ENCODE measurements at regions of chr3 and their contacts with region 1.

Region 1: DNA sequence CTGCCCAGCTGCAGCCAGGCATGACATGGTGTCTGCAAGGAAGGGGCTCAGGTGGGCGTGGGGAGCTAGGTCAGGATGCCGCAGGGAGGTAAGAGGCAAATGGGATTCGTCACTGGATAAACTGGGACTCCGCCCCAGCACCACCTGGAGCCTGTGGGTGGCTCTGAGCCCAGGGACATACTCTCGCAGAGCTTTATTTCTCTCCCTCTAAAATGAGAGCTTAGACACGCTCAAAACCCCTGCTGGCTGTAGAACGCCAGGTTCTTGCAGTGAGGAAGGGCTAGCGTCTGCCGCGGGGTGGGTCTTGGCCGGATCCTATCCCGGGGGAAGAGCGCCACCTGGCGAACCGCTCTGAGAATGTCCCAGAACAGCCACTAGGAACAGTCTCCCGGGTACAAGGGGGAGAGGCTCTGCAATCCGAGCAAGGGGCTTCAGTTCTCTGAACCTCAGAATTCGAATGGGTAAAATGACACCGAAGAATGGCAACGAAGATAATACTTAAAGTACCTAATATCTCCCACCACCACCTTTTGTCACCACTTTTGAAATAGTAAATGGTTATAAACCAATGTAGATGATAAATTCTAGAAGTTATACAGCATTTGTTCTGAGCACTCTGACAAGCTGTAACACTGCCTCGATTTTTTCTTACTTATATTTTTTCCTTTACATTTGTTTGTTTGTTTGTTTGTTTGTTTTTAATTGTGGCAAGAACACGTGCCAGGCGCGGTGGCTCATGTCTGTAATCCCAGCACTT is 53.2 kb upstream of the SRGAP3 start:
- DNase-seq: peak; percentile 93
- H3K4me3 Mint-ChIP-seq: peak overlapping the region; percentile 36
- H3K27ac Mint-ChIP-seq: no peak overlapping the region
- H3K4me1 Mint-ChIP-seq: peaks cover 6% of the 10 kb centered on the region
- H3K27me3 Mint-ChIP-seq: peaks cover 5% of the 10 kb centered on the region

Region 2: DNA sequence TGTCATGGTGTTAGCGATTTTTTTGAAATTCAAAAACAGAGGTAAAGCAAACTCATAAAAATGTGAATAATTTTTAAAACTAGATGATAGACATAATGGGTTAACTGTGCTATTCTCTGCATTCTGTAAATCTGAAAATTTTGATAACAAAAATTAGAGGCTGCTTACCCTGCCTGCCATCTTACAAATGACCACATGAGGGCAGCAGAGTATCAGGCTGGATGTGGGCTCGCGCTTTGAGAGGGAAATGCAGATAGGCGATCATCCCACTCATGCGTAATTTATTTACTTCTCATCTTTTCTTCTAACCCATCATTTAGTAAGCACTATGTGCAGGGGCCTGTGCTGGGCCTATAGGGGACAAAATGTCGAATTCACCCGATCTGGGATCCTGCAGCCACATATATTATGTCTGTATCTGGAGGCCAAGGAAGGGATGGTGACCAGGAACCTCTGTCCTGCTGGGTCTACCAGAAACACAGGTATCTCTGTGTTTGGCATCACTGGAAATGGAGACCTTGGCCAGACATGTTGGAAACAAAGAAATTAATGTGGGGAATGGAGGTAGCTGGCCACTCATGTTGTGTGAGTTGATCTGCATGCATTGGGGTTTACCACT is 331.5 kb before region 1 on chr3:
- intact Hi-C with region 1: loop called (anchors 1 kb)
- DNase-seq: peak; percentile 93
- H3K4me3 Mint-ChIP-seq: no peak overlapping the region
- H3K27ac Mint-ChIP-seq: no peak overlapping the region
- H3K4me1 Mint-ChIP-seq: peaks cover 5% of the 10 kb centered on the region
- H3K27me3 Mint-ChIP-seq: peaks cover 6% of the 10 kb centered on the region

Region 3: DNA sequence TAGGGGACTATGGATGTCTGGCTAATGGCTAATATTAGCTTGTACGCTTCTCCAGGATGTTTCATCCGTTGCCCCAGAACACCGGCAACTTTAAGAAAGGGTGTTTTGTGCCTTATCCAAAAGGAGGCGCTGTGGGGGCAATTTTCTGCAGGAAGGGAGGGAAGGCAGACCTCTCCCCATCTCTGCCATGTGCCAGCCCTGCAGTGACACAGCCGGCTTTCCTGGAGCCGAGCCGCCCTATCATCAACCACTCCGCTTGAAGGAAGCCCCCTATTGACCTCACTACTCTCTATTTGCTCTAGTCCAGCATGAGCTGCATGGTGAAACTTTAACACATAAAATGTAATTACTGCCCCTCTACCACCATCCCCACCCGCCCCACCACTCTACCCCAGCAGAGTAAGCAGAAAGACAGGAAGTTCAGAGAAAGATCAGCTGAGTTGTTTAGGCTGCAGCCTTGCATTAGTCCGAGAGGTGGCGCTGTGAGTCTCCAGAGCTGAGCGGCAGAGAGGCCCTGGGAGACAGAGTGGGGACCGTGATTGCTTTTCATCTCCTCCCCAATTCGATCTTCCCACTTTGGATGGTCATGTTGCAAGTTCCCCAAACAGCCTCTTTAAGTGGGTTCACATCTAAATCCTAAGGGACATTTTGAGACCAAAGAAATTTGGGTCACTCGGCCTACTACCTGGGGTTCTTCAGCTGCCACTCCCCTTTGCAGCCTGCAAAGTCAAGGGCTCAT is 314.8 kb before region 1 on chr3:
- intact Hi-C with region 1: loop called (anchors 1 kb)
- DNase-seq: peak; percentile 88
- H3K4me3 Mint-ChIP-seq: no peak overlapping the region
- H3K27ac Mint-ChIP-seq: no peak overlapping the region
- H3K4me1 Mint-ChIP-seq: peaks cover 3% of the 10 kb centered on the region
- H3K27me3 Mint-ChIP-seq: no peaks in the 10 kb centered on the region

Region 4: GRCh38 chr3:9067352-9067975 is 235.1 kb before region 1 on chr3:
- intact Hi-C with region 1: loop called (anchors 10 kb)
- DNase-seq: peak; percentile 76
- H3K4me3 Mint-ChIP-seq: no peak overlapping the region
- H3K27ac Mint-ChIP-seq: no peak overlapping the region
- H3K4me1 Mint-ChIP-seq: no peaks in the 10 kb centered on the region
- H3K27me3 Mint-ChIP-seq: peaks cover 1% of the 10 kb centered on the region